A549 (cell line): ENCODE measurements at regions of chr2 and their contacts with region 1.

Region 1: GRCh38 chr2:131509615-131510014 is 17.4 kb upstream of the MZT2A start:
- DNase-seq: no peak
- ATAC-seq: no peak
- H3K4me3 ChIP-seq: no peak overlapping the region
- H3K27ac ChIP-seq: no peak overlapping the region
- H3K4me1 ChIP-seq: no peaks in the 10 kb centered on the region
- CTCF ChIP-seq: no peak
- EP300 ChIP-seq: no peak
- POLR2A ChIP-seq: no peak
- RAD21 ChIP-seq: no peak

Region 2: GRCh38 chr2:131492418-131493198 is 17.0 kb before region 1 on chr2:
- CTCF ChIA-PET with region 1: interaction called, 25 read pairs
- POLR2A ChIA-PET with region 1: no interaction called
- DNase-seq: peak; percentile 93 to 98
- ATAC-seq: peak; percentile 83 to 89
- H3K4me3 ChIP-seq: peak overlapping the region; percentile 99
- H3K27ac ChIP-seq: peak overlapping the region; percentile 98 to 99
- H3K4me1 ChIP-seq: peaks cover 26% of the 10 kb centered on the region; the same call in 2 of the 3 replicates
- CTCF ChIP-seq: peak; percentile 85
- EP300 ChIP-seq: no peak
- POLR2A ChIP-seq: peak; percentile 55
- RAD21 ChIP-seq: peak; percentile 5 to 31; a peak in 2 of 5 replicates

Region 3: DNA sequence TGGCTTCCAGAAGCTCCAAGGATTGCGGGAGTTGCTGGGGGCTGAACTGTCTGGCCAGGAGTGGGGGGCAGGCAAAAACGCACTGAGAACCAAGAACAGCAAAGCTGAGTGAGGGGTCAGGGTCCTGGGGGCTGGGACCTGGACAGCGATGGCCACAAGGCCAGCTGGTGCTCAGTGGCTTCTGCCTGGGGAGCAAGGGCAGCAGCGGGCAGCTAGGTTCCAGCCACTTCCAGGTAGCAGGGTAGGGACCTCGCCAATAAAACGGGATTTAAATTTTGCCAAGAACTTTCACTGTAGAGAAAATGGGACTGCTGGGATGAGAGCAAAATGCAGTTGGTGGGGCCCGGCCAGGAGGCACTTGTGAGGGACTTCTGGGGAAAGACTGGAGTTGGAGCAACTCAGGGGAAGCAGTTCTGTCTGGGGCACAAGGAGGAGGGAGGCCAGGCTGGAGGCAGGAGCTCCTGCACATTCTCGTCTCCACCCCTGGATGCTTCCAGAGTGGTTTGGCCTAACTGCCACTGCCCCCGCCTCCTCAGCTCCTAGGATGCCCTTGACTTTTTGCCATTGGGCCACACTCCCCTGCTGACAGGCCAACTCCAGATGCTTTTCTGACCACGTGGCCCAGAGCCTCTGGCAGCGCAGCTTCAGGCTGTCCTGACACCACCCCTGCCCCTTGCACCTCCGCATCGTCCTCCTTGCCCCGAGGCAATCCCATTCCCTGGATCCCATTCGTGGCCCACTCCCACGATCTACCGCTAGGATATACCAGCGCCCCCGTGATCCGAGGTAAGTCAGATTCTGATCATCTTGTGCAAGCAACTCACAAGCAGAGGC is 12.6 kb after region 1 on chr2:
- CTCF ChIA-PET with region 1: no interaction called
- POLR2A ChIA-PET with region 1: no interaction called
- DNase-seq: no peak
- ATAC-seq: peak; percentile 16 to 19; a peak in 3 of 6 replicates
- H3K4me3 ChIP-seq: no peak overlapping the region
- H3K27ac ChIP-seq: no peak overlapping the region
- H3K4me1 ChIP-seq: peaks cover 2% of the 10 kb centered on the region; the same call in 2 of the 3 replicates
- CTCF ChIP-seq: no peak
- EP300 ChIP-seq: no peak
- POLR2A ChIP-seq: no peak
- RAD21 ChIP-seq: no peak

Region 4: GRCh38 chr2:131535526-131535925 is 25.9 kb after region 1 on chr2:
- CTCF ChIA-PET with region 1: no interaction called
- POLR2A ChIA-PET with region 1: no interaction called
- DNase-seq: no peak
- ATAC-seq: no peak
- H3K4me3 ChIP-seq: no peak overlapping the region
- H3K27ac ChIP-seq: no peak overlapping the region
- H3K4me1 ChIP-seq: no peaks in the 10 kb centered on the region
- CTCF ChIP-seq: no peak
- EP300 ChIP-seq: no peak
- POLR2A ChIP-seq: no peak
- RAD21 ChIP-seq: no peak

Region 5: DNA sequence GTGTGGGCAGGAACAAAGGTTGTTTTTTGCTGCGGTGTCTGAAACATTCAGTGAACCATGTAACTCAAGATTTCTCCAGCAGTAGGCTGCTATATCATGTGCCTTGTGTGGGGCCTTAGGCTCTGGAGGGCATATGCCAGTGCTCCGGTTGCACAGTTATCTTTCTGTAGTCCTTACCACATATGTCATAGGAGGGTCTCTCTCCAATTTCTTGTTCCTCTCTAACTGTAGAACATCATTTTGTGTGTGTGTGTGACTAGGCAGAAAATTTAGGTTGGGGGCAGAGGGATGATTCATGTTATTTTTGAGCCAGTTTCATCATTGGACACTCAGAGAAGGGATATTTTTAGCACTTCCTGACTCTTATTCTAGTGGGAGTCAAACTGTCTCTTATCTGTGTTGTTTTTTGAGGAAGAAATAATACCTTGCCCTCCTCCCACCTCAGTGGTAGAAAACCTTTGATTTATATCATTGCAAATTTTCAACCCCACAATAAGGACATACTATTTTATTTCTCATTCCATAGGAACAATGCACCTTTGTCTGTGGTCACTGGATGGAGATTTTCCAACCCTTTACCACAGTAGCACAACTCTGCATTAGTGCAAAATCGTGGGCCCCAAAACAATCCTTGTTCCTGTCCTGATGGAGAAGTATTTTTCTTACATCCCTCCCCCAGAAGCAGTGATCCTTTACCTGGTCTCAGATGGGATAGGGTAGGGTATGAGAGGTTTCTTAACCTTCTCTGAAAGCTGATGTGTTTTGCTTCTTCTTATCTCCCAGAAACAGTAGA is 132.0 kb after region 1 on chr2:
- CTCF ChIA-PET with region 1: no interaction called
- POLR2A ChIA-PET with region 1: no interaction called
- DNase-seq: no peak
- ATAC-seq: no peak
- H3K4me3 ChIP-seq: no peak overlapping the region
- H3K27ac ChIP-seq: no peak overlapping the region
- H3K4me1 ChIP-seq: no peaks in the 10 kb centered on the region
- CTCF ChIP-seq: no peak
- EP300 ChIP-seq: no peak
- POLR2A ChIP-seq: no peak
- RAD21 ChIP-seq: no peak